Ovary (tissue), 10 donors: ENCODE measurements at regions of chr9 and their contacts with region 1.

Region 1: GRCh38 chr9:107246615-107247254 is 36.3 kb upstream of the RAD23B start:
- DNase-seq: no peak
- H3K4me3 ChIP-seq: no peak overlapping the region
- H3K27ac ChIP-seq: no peak overlapping the region
- H3K4me1 ChIP-seq: no peaks in the 10 kb centered on the region
- H3K27me3 ChIP-seq: no peaks in the 10 kb centered on the region
- CTCF ChIP-seq: no peak
- EP300 ChIP-seq: no peak
- POLR2A ChIP-seq: no peak

Region 2: GRCh38 chr9:107336718-107337360 is 90.1 kb after region 1 on chr9:
- intact Hi-C with region 1: loop called in 1 of 4 experiments (anchors 5 kb)
- DNase-seq: no peak
- H3K4me3 ChIP-seq: no peak overlapping the region
- H3K27ac ChIP-seq: no peak overlapping the region
- H3K4me1 ChIP-seq: peaks cover 2% of the 10 kb centered on the region
- H3K27me3 ChIP-seq: no peaks in the 10 kb centered on the region
- CTCF ChIP-seq: no peak
- EP300 ChIP-seq: no peak
- POLR2A ChIP-seq: no peak

Region 3: DNA sequence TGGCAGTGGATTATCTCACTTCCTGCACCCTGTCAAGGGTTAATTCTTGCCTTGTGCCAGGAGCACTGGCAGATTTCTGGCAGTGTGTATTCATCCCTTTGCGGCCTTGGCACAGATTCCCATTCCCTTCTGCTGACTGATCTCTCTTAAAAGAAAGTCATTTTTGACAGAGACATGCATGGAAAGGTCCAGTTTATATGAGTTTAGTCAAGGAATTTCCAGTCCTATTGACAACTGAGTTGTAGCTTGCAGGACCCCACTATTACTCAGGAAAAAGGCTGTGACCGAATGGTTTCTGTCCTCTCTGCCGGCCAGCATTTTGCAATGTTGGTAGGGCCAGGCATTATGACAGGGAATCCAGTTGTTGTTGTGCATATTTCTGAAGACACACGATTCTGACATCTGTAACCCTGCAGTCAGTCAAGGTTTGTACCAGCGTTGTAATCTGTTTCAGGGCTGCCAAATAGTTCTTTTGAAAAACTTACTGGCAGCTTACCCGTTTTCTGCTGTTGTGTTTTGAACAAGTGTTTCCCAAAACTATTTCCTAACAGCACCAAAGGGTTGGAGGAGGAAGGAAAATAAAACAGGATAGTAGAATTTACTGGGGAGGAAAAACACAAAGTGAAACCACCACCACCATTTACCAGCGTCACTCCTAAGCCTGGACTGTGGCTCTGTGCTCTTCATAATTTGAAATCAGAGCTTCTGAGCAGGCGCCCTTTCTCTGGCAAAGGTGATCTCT is 486.2 kb after region 1 on chr9:
- intact Hi-C with region 1: no loop called
- DNase-seq: peak; percentile 41 to 64 (median 52)
- H3K4me3 ChIP-seq: peak overlapping the region; percentile 23
- H3K27ac ChIP-seq: peak overlapping the region; percentile 63 to 87
- H3K4me1 ChIP-seq: peaks cover 25% of the 10 kb centered on the region
- H3K27me3 ChIP-seq: no peaks in the 10 kb centered on the region
- CTCF ChIP-seq: no peak
- EP300 ChIP-seq: no peak
- POLR2A ChIP-seq: no peak